SK-N-SH (cell line): ENCODE measurements at regions of chr1 and their contacts with region 1.

Region 1: DNA sequence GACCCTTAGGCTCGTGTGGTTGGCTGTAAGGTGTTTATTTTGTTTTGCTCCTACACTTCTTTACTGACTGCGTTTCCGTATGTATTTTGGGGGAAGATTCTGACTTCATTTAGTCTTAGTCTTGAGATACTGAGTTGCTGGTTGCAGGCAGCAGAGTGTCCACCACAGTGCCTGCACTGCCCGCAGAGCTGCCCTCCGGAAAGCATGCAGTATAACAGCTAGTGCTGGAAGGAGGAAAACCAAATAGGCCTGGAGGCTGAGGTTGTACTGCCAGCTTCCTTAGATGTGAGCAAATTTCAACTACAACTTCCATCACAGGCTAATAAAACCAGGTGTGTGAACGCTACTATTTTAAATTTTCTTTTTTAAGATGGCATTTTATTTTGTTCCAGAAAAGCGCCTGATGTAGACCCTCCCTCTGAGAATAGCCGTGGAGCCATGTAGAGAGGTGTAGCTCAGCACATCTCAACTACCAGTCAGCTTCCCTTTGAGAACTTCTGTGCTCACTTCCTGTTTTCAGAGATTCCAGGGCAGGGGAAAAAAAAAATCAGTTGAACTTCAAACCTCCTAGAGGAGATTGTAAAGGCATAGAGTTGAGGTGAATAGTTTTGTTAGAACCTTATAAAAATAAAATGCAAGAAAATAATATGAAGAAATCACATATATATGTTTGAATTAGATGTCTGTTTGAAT is 17.6 kb downstream of the LMO4 start:
- DNase-seq: no peak
- H3K4me3 ChIP-seq: no peak overlapping the region
- H3K27ac ChIP-seq: no peak overlapping the region; a peak in 1 of 4 replicates
- H3K4me1 ChIP-seq: no peaks in the 10 kb centered on the region
- H3K27me3 ChIP-seq: no peaks in the 10 kb centered on the region
- CTCF ChIP-seq: no peak
- EP300 ChIP-seq: no peak
- RAD21 ChIP-seq: no peak

Region 2: GRCh38 chr1:86636898-86637297 is 709.4 kb before region 1 on chr1:
- CTCF ChIA-PET with region 1: no interaction called
- POLR2A ChIA-PET with region 1: no interaction called
- DNase-seq: no peak
- H3K4me3 ChIP-seq: no peak overlapping the region
- H3K27ac ChIP-seq: no peak overlapping the region
- H3K4me1 ChIP-seq: no peaks in the 10 kb centered on the region
- H3K27me3 ChIP-seq: no peaks in the 10 kb centered on the region
- CTCF ChIP-seq: no peak
- EP300 ChIP-seq: no peak
- RAD21 ChIP-seq: no peak

Region 3: DNA sequence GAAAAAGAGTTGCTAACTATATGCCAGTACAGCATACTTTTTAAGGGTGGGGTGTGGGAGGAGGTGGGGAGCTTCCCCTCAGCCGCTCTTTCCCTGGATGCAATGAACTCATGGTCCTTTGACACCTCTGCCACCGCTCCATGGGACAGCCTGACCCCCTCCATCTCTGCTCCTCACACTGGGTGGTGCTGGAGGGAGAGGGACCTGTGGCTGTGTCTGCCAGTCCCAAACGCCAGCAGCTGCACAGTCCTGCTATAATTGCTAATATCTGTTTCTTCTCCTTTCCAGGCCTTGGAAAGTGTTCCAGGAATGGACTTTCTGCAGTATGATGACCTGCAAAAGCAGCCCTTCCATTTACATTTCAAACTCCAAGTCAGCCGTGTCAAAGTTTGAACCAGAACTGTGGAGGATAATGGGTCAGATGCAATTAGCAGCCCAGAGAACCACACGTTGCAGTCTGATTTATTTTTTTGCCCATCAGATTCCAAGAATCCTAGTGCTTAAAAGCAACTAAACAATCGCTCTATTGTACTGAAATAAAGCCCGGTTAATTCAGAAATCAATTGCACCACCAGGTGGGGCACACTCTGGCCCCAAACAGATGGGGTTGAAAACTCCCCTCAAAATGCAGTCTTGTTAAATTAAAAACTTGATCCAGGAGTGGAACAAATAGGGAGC is 178.3 kb before region 1 on chr1:
- CTCF ChIA-PET with region 1: no interaction called
- POLR2A ChIA-PET with region 1: no interaction called
- DNase-seq: no peak
- H3K4me3 ChIP-seq: no peak overlapping the region
- H3K27ac ChIP-seq: no peak overlapping the region
- H3K4me1 ChIP-seq: no peaks in the 10 kb centered on the region
- H3K27me3 ChIP-seq: no peaks in the 10 kb centered on the region
- CTCF ChIP-seq: peak; percentile 16; the same call in 1 of the 2 replicates
- EP300 ChIP-seq: no peak
- RAD21 ChIP-seq: no peak

Region 4: GRCh38 chr1:87335175-87335884 is 10.9 kb before region 1 on chr1:
- CTCF ChIA-PET with region 1: interaction called, 13 read pairs
- POLR2A ChIA-PET with region 1: no interaction called
- DNase-seq: peak; percentile 84
- H3K4me3 ChIP-seq: peak overlapping the region; percentile 66 to 67
- H3K27ac ChIP-seq: peak overlapping the region; percentile 3 to 60; a peak in 3 of 4 replicates
- H3K4me1 ChIP-seq: peaks cover 3 to 25% of the 10 kb centered on the region in 2 experiments
- H3K27me3 ChIP-seq: no peaks in the 10 kb centered on the region
- CTCF ChIP-seq: peak; percentile 31; the same call in 1 of the 2 replicates
- EP300 ChIP-seq: no peak
- RAD21 ChIP-seq: no peak; the same call in 1 of the 2 replicates